Right ventricle myocardium superior (tissue), 1 donor: ENCODE measurements at regions of chr4 and their contacts with region 1.

Region 1: DNA sequence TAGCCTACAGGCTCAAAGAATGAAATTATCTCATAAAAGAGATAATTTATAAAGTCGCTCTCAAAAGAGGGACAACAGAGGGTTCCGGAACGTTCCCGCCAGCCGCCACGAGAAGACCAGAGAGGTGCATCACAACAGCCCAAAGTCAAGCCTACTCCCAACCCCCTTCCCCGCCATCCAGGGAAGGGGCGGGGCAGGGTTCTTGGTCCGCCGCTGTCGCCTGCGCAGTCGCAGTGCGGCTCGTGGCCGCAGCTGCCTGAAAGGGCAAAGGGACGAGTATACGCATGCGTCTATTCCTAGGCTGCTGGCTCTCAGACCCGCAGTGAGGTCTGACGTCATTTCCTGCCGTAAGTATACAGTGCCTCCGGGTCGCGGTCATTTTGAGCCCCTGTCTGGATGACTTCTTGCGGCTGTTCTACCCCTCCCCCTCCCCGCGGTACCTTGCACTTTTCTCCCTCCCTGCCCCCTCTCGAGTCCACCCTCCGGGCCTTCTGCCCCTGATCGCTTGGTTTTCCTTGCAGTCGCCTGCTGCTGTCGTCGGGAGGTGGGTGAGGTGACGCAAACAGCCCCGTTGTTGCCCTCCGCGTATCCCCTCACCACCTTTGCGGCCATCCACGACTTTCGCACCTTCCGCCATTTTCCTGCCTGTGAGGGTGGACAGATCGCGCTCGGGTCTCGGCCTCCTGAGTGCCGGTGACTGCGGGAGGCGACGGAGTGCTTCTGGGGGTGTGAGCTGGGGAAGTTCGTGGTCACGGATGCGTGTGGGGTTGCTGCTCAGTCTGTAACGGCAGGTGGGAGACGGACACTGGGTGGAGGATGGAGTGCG is at the start of gene OCIAD1:
- DNase-seq: peak; percentile 97
- ATAC-seq: peak; percentile 100
- total RNA-seq, gene OCIAD1: 121 TPM

Region 2: GRCh38 chr4:48779998-48780742 is 50.7 kb before region 1 on chr4 and contains the start of gene FRYL:
- intact Hi-C with region 1: loop called (anchors 5 kb)
- DNase-seq: peak; percentile 99
- ATAC-seq: peak; percentile 92
- total RNA-seq, gene FRYL: 27.9 TPM